Activated CD4-positive, alpha-beta memory T cell treated with anti-CD3 and anti-CD28 coated beads, Interleukin-2, amount 10 ng/mL, durations not matched to agents 7 days and 5 days (primary cell): ENCODE measurements at regions of chr14 and their contacts with region 1.

Region 1: GRCh38 chr14:70827396-70828151 is 18.3 kb upstream of the MAP3K9 start:
- DNase-seq: no peak
- H3K4me3 Mint-ChIP-seq: no peak overlapping the region
- H3K27ac Mint-ChIP-seq: no peak overlapping the region
- H3K4me1 Mint-ChIP-seq: peaks cover 10% of the 10 kb centered on the region
- H3K27me3 Mint-ChIP-seq: peaks cover 20% of the 10 kb centered on the region

Region 2: GRCh38 chr14:70816525-70816924 is 11.0 kb before region 1 on chr14:
- CTCF ChIA-PET with region 1: interaction called, 19 read pairs
- POLR2A ChIA-PET with region 1: interaction called, 4 read pairs
- DNase-seq: no peak
- H3K4me3 Mint-ChIP-seq: no peak overlapping the region
- H3K27ac Mint-ChIP-seq: no peak overlapping the region
- H3K4me1 Mint-ChIP-seq: peaks cover 10% of the 10 kb centered on the region
- H3K27me3 Mint-ChIP-seq: peaks cover 17% of the 10 kb centered on the region

Region 3: DNA sequence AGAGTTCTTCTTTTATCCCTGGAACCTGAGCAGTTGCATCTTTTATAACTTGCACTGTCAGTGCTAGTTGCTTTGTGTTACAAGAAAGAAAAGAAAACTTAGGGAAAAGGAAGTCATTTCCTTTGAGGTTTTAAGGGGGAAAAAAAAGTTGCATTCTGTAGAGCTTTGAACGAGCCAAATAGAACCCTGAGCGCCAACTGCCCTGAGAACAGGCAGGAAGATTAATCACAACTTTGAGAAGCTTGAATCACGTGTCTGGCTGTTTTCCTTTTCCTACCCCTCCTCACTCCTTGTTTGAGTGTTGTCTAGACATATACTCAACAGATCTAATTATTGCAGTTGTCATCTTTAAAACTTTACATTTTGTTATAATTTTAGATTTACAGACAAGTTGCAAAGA is 92.2 kb after region 1 on chr14:
- CTCF ChIA-PET with region 1: no interaction called
- POLR2A ChIA-PET with region 1: no interaction called
- DNase-seq: no peak
- H3K4me3 Mint-ChIP-seq: no peak overlapping the region
- H3K27ac Mint-ChIP-seq: peak overlapping the region; percentile 74
- H3K4me1 Mint-ChIP-seq: peaks cover 83% of the 10 kb centered on the region
- H3K27me3 Mint-ChIP-seq: no peaks in the 10 kb centered on the region